GM12878 (cell line): ENCODE measurements at regions of chr20 and their contacts with region 1.

Region 1: GRCh38 chr20:44080646-44081267 is 106.2 kb downstream of the JPH2 start:
- DNase-seq: peak; percentile 55
- ATAC-seq: peak; percentile 93
- H3K4me3 ChIP-seq: no peak overlapping the region
- H3K27ac ChIP-seq: no peak overlapping the region
- H3K4me1 ChIP-seq: 0 out of 2 replicates have a peak, but pooled peaks cover 4% of the 10 kb centered on the region
- H3K27me3 ChIP-seq: no peaks in the 10 kb centered on the region
- CTCF ChIP-seq: peak; percentile 93 to 99 (median 99); a peak in 5 of 6 replicates
- EP300 ChIP-seq: no peak
- POLR2A ChIP-seq: no peak
- RAD21 ChIP-seq: peak; percentile 100

Region 2: GRCh38 chr20:43448748-43449535 is 631.8 kb before region 1 on chr20:
- CTCF ChIA-PET with region 1: interaction called, 4 read pairs
- POLR2A ChIA-PET with region 1: no interaction called
- RAD21 ChIA-PET with region 1: interaction called, 12 read pairs
- SMC1A ChIA-PET with region 1: interaction called, 3 read pairs
- in situ Hi-C with region 1: loop called (anchors 5 kb)
- intact Hi-C with region 1: no loop called
- DNase-seq: peak; percentile 13
- ATAC-seq: peak; percentile 89
- H3K4me3 ChIP-seq: no peak overlapping the region
- H3K27ac ChIP-seq: no peak overlapping the region
- H3K4me1 ChIP-seq: no peaks in the 10 kb centered on the region
- H3K27me3 ChIP-seq: no peaks in the 10 kb centered on the region
- CTCF ChIP-seq: peak; percentile 74 to 87 (median 77)
- EP300 ChIP-seq: no peak
- POLR2A ChIP-seq: no peak
- RAD21 ChIP-seq: peak; percentile 90

Region 3: DNA sequence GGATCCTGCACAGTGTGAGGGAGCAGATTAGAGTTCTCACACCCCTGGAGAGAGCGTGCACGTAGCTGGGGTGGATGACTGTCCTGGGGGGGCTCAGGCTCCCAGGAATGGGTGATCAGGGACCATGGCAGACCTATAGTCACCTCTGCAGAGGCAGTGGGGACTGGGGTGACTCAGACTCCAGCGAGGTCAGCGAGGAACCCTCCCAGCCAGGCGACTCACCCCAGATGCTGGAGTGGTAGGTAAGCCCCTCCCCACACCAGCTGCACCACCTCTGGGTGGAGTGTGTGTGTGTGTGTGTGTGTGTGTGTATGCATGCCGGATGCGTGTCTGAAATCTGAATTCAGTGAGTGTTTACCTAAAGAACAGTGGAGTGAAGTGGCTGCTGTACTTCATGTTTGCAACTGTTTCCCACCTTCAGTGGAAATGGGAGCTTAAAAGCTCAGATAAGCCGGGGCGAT is 336.6 kb before region 1 on chr20:
- CTCF ChIA-PET with region 1: interaction called, 223 read pairs
- POLR2A ChIA-PET with region 1: interaction called, 15 read pairs
- RAD21 ChIA-PET with region 1: interaction called, 182 read pairs
- SMC1A ChIA-PET with region 1: interaction called, 164 read pairs
- in situ Hi-C with region 1: no loop called
- intact Hi-C with region 1: no loop called
- DNase-seq: no peak
- ATAC-seq: no peak
- H3K4me3 ChIP-seq: no peak overlapping the region
- H3K27ac ChIP-seq: no peak overlapping the region
- H3K4me1 ChIP-seq: no peaks in the 10 kb centered on the region
- H3K27me3 ChIP-seq: no peaks in the 10 kb centered on the region
- CTCF ChIP-seq: no peak
- EP300 ChIP-seq: no peak
- POLR2A ChIP-seq: no peak
- RAD21 ChIP-seq: no peak

Region 4: DNA sequence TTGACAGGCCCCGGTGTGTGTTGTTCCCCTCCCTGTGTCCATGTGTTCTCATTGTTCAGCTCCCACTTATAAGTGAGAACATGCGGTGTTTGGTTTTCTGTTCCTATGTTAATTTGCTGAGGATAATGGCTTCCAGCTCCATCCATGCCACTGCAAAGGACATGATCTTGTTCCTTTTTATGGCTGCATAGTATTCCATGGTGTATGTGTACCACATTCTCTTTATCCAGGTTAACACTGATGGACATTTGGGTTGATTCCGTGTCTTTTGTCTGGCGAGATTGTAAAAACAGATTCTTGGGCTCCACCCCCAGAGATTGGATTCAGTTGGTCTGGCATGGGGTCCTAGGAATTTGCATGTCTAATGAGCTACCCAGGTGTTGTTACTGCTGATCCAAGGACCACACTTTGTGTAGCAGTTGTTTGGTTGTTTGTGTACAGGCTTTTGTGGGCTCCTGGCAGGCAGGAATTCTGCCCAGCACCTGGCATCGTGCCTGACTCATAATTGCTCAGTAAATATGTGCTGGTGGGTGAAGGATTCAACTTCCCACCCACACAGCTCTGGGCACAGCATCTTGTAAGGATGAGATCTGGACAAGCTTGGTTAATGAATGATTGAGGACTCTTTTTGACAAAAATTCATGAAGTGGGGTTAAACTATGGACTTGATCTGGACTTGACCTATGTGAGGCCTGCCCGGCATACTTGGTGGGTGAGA is 160.9 kb before region 1 on chr20:
- CTCF ChIA-PET with region 1: interaction called, 13 read pairs
- POLR2A ChIA-PET with region 1: interaction called, 7 read pairs
- RAD21 ChIA-PET with region 1: interaction called, 3 read pairs
- SMC1A ChIA-PET with region 1: interaction called, 8 read pairs
- in situ Hi-C with region 1: no loop called
- intact Hi-C with region 1: loop called (anchors 5 kb)
- DNase-seq: no peak
- ATAC-seq: no peak
- H3K4me3 ChIP-seq: no peak overlapping the region
- H3K27ac ChIP-seq: no peak overlapping the region
- H3K4me1 ChIP-seq: peaks cover 43% of the 10 kb centered on the region
- H3K27me3 ChIP-seq: peaks cover 0 to 4% of the 10 kb centered on the region in 2 experiments; a peak in 2 of 4 replicates
- CTCF ChIP-seq: no peak
- EP300 ChIP-seq: no peak
- POLR2A ChIP-seq: no peak
- RAD21 ChIP-seq: no peak

Region 5: DNA sequence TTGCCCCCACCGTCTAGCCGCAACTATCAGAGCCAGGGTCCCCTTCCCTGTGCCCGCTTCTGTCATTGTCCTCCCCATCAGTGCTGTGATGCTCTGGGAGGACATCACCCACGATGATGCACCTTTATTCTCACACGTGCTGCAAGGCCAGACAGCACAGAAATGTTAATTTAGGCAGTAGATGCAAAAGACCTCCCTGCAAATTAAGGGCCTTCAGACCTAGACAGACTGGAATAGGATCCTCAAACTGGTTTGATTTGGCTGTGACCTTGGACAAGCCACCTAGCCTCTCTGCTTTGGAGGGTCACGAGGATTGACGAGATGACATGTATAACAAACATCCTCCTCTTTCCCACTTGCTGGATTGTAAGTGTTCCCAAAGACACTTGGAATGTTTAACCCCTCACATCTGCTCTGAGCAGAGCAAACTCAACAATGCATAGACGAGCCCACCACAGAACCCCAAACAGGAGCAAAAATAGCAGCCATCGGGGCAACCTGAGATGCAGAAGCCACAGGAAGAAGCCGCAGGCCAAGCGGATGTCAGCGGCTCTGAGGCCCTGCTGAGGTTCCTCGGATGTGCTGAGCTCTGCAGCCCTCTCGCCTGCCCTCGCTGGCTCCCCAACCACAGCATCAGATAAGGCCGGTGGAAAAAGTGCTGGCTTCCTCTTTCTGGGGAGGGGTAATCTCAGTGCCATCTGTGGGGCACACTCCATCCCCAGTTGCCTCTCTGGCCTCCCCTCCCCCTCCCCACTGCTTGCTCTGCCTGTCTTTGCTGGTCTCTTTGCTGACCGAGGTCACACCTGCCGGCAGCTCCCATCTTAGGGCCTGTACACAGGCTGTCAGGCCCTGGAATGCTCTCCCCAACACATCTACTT is 130.8 kb before region 1 on chr20:
- CTCF ChIA-PET with region 1: interaction called, 4 read pairs
- POLR2A ChIA-PET with region 1: no interaction called
- RAD21 ChIA-PET with region 1: interaction called, 5 read pairs
- SMC1A ChIA-PET with region 1: interaction called, 3 read pairs
- in situ Hi-C with region 1: no loop called
- intact Hi-C with region 1: loop called (anchors 2 kb)
- DNase-seq: peak; percentile 66
- ATAC-seq: peak; percentile 92
- H3K4me3 ChIP-seq: no peak overlapping the region
- H3K27ac ChIP-seq: peak overlapping the region; percentile 45
- H3K4me1 ChIP-seq: peaks cover 35% of the 10 kb centered on the region
- H3K27me3 ChIP-seq: no peaks in the 10 kb centered on the region
- CTCF ChIP-seq: no peak
- EP300 ChIP-seq: peak; percentile 28 to 41; a peak in 2 of 4 replicates
- POLR2A ChIP-seq: peak; percentile 53
- RAD21 ChIP-seq: no peak

Region 6: GRCh38 chr20:44069203-44070011 is 11.3 kb before region 1 on chr20:
- CTCF ChIA-PET with region 1: interaction called, 7 read pairs
- POLR2A ChIA-PET with region 1: no interaction called
- RAD21 ChIA-PET with region 1: interaction called, 13 read pairs
- SMC1A ChIA-PET with region 1: interaction called, 6 read pairs
- in situ Hi-C with region 1: no loop called
- intact Hi-C with region 1: no loop called
- DNase-seq: peak; percentile 57
- ATAC-seq: peak; percentile 79
- H3K4me3 ChIP-seq: peak overlapping the region; percentile 54
- H3K27ac ChIP-seq: peak overlapping the region; percentile 32; the same call in 1 of the 2 replicates
- H3K4me1 ChIP-seq: peaks cover 18% of the 10 kb centered on the region
- H3K27me3 ChIP-seq: no peaks in the 10 kb centered on the region
- CTCF ChIP-seq: no peak
- EP300 ChIP-seq: peak; percentile 77 to 91
- POLR2A ChIP-seq: peak; percentile 31; the same call in 1 of the 2 replicates
- RAD21 ChIP-seq: no peak

Region 7: GRCh38 chr20:44111712-44112335 is 31.1 kb after region 1 on chr20:
- CTCF ChIA-PET with region 1: no interaction called
- POLR2A ChIA-PET with region 1: no interaction called
- RAD21 ChIA-PET with region 1: no interaction called
- SMC1A ChIA-PET with region 1: no interaction called
- in situ Hi-C with region 1: no loop called
- intact Hi-C with region 1: no loop called
- DNase-seq: no peak
- ATAC-seq: no peak
- H3K4me3 ChIP-seq: no peak overlapping the region
- H3K27ac ChIP-seq: no peak overlapping the region
- H3K4me1 ChIP-seq: no peaks in the 10 kb centered on the region
- H3K27me3 ChIP-seq: peaks cover 0 to 2% of the 10 kb centered on the region in 2 experiments; a peak in 2 of 4 replicates
- CTCF ChIP-seq: no peak
- EP300 ChIP-seq: no peak
- POLR2A ChIP-seq: no peak
- RAD21 ChIP-seq: no peak

Region 8: GRCh38 chr20:44279228-44279627 is 198.5 kb after region 1 on chr20:
- CTCF ChIA-PET with region 1: no interaction called
- POLR2A ChIA-PET with region 1: no interaction called
- RAD21 ChIA-PET with region 1: no interaction called
- SMC1A ChIA-PET with region 1: no interaction called
- in situ Hi-C with region 1: no loop called
- intact Hi-C with region 1: no loop called
- DNase-seq: no peak
- ATAC-seq: no peak
- H3K4me3 ChIP-seq: no peak overlapping the region
- H3K27ac ChIP-seq: no peak overlapping the region
- H3K4me1 ChIP-seq: no peaks in the 10 kb centered on the region; the same call in 1 of the 2 replicates
- H3K27me3 ChIP-seq: no peaks in the 10 kb centered on the region; a peak in 1 of 4 replicates
- CTCF ChIP-seq: no peak
- EP300 ChIP-seq: no peak
- POLR2A ChIP-seq: no peak
- RAD21 ChIP-seq: no peak

Region 9: DNA sequence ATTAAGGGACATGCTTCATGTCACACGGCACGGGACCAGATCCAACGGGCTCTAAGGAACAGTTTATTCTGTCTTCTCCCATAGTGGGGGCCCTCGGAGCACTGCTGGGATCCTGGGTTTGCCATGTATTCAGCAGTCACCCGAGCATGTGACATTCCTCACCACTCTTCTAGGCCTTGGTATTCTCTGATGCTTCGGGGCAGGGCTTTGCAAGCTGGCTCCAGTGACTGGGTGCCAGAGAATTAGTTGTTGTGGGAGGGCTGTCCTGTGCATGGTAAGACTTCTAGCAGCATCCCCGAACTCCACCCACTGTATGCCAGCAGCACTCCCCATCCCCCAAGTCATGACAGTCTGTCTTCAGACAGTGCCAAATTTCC is 639.8 kb after region 1 on chr20:
- CTCF ChIA-PET with region 1: no interaction called
- POLR2A ChIA-PET with region 1: no interaction called
- RAD21 ChIA-PET with region 1: no interaction called
- SMC1A ChIA-PET with region 1: no interaction called
- in situ Hi-C with region 1: no loop called
- intact Hi-C with region 1: no loop called
- DNase-seq: no peak
- ATAC-seq: no peak
- H3K4me3 ChIP-seq: no peak overlapping the region
- H3K27ac ChIP-seq: no peak overlapping the region
- H3K4me1 ChIP-seq: no peaks in the 10 kb centered on the region
- H3K27me3 ChIP-seq: peaks cover 0 to 1% of the 10 kb centered on the region in 2 experiments; a peak in 2 of 4 replicates
- CTCF ChIP-seq: no peak
- EP300 ChIP-seq: no peak
- POLR2A ChIP-seq: no peak
- RAD21 ChIP-seq: no peak